AG04450 (cell line): ENCODE measurements at regions of chr16 and their contacts with region 1.

Region 1: DNA sequence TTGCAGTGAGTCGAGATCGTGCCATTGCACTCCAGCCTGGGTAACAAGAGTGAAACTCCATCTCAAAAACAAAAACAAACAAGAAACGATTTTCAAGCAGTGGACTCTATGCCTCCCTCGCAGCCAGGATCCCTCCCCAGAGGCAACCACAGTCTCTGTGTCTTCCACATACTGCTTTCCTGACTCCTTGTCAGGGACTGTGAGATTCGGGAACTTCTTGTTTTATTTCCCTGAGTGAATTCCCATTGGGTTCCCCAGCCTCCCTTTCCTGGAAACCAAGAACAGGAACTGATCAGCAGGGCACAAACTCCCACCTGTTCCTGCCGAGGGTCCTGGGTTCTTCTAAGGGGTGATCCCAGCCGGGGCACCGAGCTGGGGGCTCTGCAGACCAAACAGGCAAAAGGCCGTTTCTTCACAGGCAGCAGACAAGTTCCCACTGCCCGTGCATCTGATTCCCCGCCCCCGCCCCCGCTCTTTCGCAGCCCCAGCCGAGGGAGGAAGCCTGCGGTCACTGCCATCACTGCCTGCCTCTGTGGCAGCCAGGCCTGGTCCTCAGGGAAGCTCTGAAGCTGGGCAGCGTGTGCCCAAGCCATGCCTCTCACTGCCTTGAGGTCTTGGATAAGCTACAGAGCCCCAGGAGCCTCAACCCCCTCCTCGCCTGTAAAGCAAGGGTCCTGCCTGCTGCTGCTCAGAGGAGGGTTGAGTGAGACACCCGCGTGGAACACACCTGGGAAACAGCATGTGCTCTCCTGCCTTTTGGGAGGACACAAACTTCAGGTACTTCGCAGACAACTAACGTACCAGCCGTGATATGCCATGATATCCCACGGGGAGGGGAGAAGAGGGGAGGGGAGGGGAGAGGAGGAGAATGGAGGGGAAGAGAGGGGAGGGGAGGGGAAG is 5.5 kb upstream of the PIEZO1 start:
- DNase-seq: no peak
- H3K4me3 ChIP-seq: no peak overlapping the region
- H3K27ac ChIP-seq: no peak overlapping the region
- H3K27me3 ChIP-seq: no peaks in the 10 kb centered on the region
- CTCF ChIP-seq: no peak

Region 2: DNA sequence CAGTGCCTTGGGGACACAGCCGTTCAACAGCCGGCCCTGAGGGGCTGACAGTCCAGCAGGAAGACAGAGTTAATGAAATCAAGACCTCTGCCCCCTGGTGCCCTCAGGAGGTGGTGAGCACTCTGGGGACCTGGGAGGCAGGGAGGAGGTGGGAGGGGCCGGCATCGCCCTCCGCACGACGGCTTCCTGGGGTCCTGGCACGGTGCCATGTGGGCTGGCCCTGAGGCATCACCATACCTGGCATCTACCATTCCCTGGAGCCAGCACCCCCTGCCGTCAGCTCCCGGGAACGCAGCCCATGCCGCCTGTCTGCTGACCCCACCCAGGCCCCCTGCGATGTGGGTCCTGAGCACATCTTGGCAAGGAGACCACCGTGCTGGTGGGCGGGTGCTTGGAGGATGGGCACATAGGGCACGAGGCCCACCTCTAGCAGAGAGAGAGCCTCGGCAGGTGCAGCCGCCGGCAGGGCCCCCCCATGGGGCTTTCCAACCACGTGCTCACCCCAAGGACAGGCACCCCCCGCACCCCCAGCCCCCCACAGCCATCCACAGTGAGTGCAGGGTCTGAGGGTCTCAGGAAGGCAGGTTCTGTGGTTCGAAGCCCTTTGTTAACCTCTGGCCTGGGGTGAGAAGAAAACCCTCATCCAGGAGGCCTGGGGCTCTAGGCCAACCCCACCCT is 285.0 kb before region 1 on chr16:
- CTCF ChIA-PET with region 1: no interaction called
- POLR2A ChIA-PET with region 1: no interaction called
- DNase-seq: no peak
- H3K4me3 ChIP-seq: no peak overlapping the region
- H3K27ac ChIP-seq: no peak overlapping the region
- H3K27me3 ChIP-seq: no peaks in the 10 kb centered on the region
- CTCF ChIP-seq: peak; percentile 30

Region 3: DNA sequence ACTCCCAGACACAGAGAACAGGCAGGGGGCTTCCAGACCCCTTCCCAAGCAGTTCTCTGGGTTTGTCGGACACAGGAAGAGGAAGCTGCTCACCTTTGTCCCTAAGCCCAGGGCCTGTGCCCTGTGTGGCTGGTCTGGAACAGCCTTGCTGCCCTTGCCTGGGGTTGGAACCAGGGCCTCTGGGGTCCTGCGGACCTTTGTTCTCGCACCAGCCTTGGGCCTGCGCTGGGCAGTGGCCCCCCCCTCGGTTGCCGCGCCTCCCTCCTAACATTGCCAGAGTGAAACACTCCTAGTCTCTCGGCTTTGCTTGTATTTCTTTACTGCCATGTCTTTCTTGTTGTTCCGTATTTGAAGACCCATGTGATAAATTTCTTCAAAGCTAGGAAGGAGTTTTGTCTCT is 160.7 kb before region 1 on chr16:
- CTCF ChIA-PET with region 1: no interaction called
- POLR2A ChIA-PET with region 1: interaction called, 14 read pairs
- DNase-seq: no peak
- H3K4me3 ChIP-seq: no peak overlapping the region
- H3K27ac ChIP-seq: no peak overlapping the region
- H3K27me3 ChIP-seq: no peaks in the 10 kb centered on the region
- CTCF ChIP-seq: no peak

Region 4: GRCh38 chr16:88779406-88780141 is 11.0 kb before region 1 on chr16:
- CTCF ChIA-PET with region 1: no interaction called
- POLR2A ChIA-PET with region 1: no interaction called
- DNase-seq: no peak
- H3K4me3 ChIP-seq: no peak overlapping the region
- H3K27ac ChIP-seq: no peak overlapping the region
- H3K27me3 ChIP-seq: no peaks in the 10 kb centered on the region
- CTCF ChIP-seq: no peak